Activated B cell treated with CpG ODN at 0.5 μM for 24 hours (primary cell): ENCODE measurements at regions of chr17 and their contacts with region 1.

Region 1: DNA sequence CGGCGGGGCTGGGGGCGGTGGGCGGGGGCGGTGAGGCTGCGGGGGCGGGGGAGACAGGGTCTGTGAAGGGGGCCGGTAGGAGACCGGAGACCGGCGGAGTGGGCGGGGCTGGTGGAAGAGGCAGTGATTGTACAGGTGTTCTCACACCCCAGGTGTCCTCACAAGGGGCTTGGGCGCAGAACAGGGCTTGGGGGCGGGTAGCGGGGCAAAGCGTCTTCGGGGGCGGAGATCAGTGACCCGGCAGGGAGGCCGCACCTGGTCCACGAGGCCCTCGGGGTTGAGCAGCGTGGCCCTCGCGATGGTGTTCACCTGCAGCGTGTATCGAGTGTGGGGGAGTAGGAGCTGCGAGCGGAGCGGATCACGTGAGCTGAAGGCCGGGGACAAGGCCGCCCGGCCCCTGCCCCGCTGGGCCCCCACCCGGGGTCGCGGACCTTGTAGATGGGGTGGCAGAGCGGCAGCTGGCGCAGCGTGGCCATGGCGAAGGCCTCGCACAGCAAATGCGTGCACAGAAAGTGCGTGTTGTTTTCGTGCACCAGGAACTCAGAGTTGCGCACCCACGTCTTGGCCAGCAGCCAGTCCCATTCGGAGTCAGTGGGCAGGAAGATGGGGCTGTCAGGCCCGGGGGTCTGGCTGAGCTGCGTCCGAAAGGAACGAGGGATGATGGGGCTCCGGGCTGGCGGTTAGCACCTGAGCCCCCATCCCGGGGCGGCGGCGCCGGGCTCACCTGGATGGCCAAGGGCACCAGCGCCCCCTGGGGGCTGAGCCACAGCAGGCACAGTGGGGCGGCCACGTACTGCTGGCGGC is 8.5 kb downstream of the ALOXE3 start:
- DNase-seq: peak; percentile 79
- ATAC-seq: peak; percentile 98
- H3K4me3 Mint-ChIP-seq: peak overlapping the region; percentile 57
- H3K27ac Mint-ChIP-seq: no peak overlapping the region
- H3K4me1 Mint-ChIP-seq: peaks cover 6% of the 10 kb centered on the region
- H3K27me3 Mint-ChIP-seq: peaks cover 34% of the 10 kb centered on the region
- CTCF ChIP-seq: no peak

Region 2: DNA sequence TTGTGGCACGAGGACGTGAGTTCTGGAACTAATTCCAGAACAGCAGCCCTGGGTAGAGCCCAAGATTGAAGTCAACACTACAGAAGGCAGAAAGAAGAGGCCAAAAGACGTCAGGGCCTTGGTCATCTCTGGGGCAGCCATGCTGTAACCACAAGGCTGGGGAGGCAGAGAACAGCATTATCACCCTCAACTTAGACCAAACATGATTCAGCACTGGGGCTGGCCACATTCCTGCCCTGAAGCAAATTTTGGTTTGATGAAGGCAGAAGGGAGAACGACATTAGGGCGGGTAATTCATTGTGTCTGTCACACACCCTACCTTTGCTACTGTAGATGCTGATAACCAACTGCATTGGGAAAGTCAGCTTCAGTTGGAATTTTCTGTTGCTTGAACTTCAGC is 80.7 kb before region 1 on chr17:
- CTCF ChIA-PET with region 1: no interaction called
- POLR2A ChIA-PET with region 1: no interaction called
- intact Hi-C with region 1: no loop called
- DNase-seq: no peak
- ATAC-seq: no peak
- H3K4me3 Mint-ChIP-seq: no peak overlapping the region
- H3K27ac Mint-ChIP-seq: no peak overlapping the region
- H3K4me1 Mint-ChIP-seq: no peaks in the 10 kb centered on the region
- H3K27me3 Mint-ChIP-seq: peaks cover 51% of the 10 kb centered on the region
- CTCF ChIP-seq: no peak

Region 3: DNA sequence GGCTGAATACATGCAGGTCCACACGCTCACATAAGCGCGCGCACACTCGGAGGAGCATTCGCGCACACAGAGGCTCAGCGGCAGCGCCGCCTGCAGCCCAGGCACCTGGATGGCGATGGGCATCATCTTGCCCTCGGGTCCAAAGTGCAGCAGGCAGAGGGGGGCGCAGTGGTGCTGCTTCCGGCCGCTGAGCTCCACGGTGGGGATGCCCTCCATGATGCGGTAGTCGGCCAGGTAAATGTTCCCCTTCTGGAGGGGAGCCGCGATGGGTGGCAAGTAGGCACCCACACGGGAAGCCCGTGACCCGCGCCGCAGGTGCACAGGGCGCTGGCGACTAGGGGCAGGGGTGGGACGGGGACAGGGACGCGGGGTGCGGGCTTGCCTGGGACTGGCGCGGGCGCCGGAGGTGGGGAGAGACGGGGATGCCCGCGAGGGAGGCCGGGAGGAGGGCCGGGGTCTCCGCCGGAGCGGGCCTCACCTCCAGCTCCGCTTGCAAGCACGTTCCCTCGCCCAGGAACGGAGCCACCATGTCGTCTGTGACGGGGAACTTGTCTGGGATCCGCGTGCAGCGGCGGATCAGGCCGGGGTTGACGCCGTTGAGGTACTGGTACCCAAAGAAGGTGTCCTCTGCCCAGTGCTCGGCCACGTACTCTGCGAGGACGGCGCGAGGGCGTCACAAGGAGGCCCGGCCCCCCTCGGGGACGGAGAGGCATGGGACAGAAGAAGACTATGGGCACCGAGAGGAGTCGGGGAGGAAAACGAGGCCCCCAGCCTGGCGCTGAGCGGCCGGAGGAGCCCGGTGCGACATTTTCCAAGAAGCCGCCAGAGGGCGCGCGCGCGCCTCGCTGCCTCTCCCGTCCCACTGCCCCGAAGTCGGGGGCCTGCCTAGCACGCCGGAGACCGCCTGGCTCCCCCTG is 30.3 kb before region 1 on chr17:
- CTCF ChIA-PET with region 1: interaction called, 112 read pairs
- POLR2A ChIA-PET with region 1: interaction called, 6 read pairs
- intact Hi-C with region 1: loop called (anchors 1 kb)
- DNase-seq: peak; percentile 82
- ATAC-seq: peak; percentile 85
- H3K4me3 Mint-ChIP-seq: peak overlapping the region; percentile 89
- H3K27ac Mint-ChIP-seq: peak overlapping the region; percentile 83
- H3K4me1 Mint-ChIP-seq: peaks cover 17% of the 10 kb centered on the region
- H3K27me3 Mint-ChIP-seq: peaks cover 13% of the 10 kb centered on the region
- CTCF ChIP-seq: no peak

Region 4: DNA sequence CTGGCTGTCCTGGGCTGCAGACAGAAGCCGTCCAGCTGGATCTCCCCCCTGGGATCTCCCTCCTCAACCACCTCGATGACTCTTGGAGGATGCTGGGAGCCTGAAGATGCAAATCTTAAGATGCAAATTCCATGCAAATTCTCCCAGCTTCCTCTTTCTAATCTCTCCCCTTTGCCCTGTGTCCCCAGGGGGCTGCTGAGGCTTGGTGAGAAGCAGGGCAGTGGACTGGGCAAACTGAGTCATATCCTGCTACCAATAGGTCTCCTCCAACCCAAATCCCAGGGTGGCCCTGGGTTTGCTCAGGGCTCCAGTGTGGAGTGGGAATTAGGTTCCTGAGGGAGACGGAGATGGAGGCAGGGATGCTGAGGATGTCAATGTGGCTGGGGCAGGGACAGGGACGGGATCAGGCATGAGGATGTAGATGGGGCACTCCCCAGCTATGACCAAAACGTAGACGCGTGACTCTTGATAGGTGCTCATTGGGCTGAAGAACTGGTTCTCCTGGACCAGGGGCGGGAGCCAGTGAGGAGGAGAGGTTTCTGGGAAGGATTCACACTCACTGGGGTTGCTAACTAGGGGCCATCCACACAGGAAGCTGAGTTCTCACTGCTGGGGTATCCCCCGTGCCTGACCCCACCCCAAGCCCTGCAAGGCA is 18.7 kb before region 1 on chr17:
- CTCF ChIA-PET with region 1: interaction called, 46 read pairs
- POLR2A ChIA-PET with region 1: interaction called, 7 read pairs
- intact Hi-C with region 1: loop called (anchors 2 kb)
- DNase-seq: peak; percentile 71
- ATAC-seq: peak; percentile 90
- H3K4me3 Mint-ChIP-seq: peak overlapping the region; percentile 80
- H3K27ac Mint-ChIP-seq: peak overlapping the region; percentile 95
- H3K4me1 Mint-ChIP-seq: peaks cover 46% of the 10 kb centered on the region
- H3K27me3 Mint-ChIP-seq: peaks cover 7% of the 10 kb centered on the region
- CTCF ChIP-seq: no peak

Region 5: DNA sequence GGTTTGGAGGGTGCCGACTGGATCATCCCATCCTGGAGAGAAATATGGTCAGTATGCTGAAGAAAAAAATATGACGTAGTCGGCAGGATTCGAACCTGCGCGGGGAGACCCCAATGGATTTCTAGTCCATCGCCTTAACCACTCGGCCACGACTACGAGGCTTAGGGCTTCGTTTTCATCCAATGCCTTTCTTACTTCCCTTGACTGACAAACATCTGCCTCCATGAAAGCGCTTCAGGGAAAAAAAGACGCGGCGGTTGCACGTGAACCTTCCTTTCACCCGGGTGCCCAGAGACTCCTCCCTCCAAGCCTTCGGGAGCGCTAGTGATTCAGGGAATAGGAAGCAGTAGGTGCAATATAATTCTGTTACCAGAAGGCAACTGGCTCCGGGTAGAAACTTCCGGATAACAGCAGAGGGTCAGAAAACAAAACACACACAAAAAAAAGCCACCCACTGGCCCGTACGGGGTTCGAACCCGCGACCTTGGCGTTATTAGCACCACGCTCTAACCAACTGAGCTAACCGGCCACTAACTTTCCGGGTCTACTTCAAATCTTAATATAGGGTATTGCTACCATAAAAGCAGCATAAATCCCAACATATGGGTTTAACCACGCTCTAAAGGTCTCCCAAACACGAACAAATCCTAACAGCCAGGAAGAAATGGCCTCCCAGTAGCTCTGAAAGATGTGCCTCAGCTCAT is 116.8 kb after region 1 on chr17:
- CTCF ChIA-PET with region 1: no interaction called
- POLR2A ChIA-PET with region 1: no interaction called
- intact Hi-C with region 1: no loop called
- DNase-seq: peak; percentile 36
- ATAC-seq: no peak
- H3K4me3 Mint-ChIP-seq: peak overlapping the region; percentile 81
- H3K27ac Mint-ChIP-seq: peak overlapping the region; percentile 95
- H3K4me1 Mint-ChIP-seq: peaks cover 55% of the 10 kb centered on the region
- H3K27me3 Mint-ChIP-seq: peaks cover 7% of the 10 kb centered on the region
- CTCF ChIP-seq: no peak